Left ventricle myocardium superior (tissue), 1 donor: ENCODE measurements at regions of chr19 and their contacts with region 1.

Region 1: GRCh38 chr19:3471954-3472655 is 8.2 kb downstream of the SMIM24 start:
- DNase-seq: peak; percentile 68
- ATAC-seq: peak; percentile 63

Region 2: GRCh38 chr19:3325451-3325850 is 146.7 kb before region 1 on chr19:
- intact Hi-C with region 1: loop called (anchors 5 kb)
- DNase-seq: no peak
- ATAC-seq: no peak